ENCODE measurements at regions of chr5 and their contacts with region 1.

Region 1: GRCh38 chr5:171419688-171420430 is 412 bp downstream of the FGF18 start:
- DNase-seq: peak in 2 of 7 donors; percentile 9 to 51
- H3K4me3 ChIP-seq: peak overlapping the region in 1 of 4 donors; percentile 43
- H3K27ac ChIP-seq: no peak overlapping the region
- H3K4me1 ChIP-seq: peaks cover 18 to 28% of the 10 kb centered on the region in 2 donors
- H3K27me3 ChIP-seq: peaks cover 18% of the 10 kb centered on the region
- CTCF ChIP-seq: no peak
- POLR2A ChIP-seq: no peak

Region 2: DNA sequence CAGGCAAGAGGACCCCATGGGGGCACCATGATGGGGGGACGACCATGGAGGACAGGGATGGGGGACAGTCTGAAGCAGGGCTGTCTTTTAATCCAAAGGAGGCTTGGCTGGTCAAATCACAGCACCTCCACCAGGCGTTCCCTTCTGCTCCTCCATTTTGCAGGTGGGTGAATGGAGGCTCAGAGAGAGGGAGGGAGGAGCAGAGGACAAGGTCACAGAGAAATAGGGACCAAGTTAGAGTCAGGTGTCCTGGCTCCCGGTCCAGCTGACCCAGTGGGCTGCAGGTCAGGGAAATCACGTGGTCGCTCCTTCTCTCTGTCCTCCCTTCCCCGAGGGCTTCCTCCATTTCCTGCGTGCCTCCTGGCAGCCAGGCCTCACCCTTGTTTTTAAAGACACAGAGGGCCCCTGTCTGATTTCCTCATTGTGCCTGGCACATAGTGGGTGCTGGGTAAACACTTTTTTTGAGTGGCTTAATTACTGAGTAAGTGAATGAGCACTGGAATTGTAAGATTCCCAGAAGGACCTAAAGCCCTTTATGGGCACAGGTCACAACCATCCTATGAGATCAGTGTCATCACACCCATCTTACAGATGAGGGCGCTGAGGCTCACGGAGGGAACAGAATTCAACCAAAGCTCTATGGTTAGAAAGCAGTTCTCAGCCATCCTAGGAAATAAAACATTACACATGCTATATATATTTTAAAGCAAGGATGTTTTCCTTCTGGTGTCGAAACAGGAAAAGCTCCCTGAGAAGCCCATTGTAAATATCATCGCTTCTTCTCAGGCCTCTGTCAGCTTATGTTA is 209.6 kb after region 1 on chr5:
- intact Hi-C with region 1: loop called in 1 of 2 experiments (anchors 10 kb)
- DNase-seq: no peak
- H3K4me3 ChIP-seq: no peak overlapping the region
- H3K27ac ChIP-seq: no peak overlapping the region
- H3K4me1 ChIP-seq: peaks cover 0 to 9% of the 10 kb centered on the region in 2 donors
- H3K27me3 ChIP-seq: peaks cover 10% of the 10 kb centered on the region
- CTCF ChIP-seq: no peak
- POLR2A ChIP-seq: no peak

Region 3: GRCh38 chr5:171762903-171763302 is 343.0 kb after region 1 on chr5:
- intact Hi-C with region 1: no loop called
- DNase-seq: no peak
- H3K4me3 ChIP-seq: no peak overlapping the region
- H3K27ac ChIP-seq: no peak overlapping the region
- H3K4me1 ChIP-seq: no peaks in the 10 kb centered on the region
- H3K27me3 ChIP-seq: no peaks in the 10 kb centered on the region
- CTCF ChIP-seq: no peak
- POLR2A ChIP-seq: no peak

Region 4: DNA sequence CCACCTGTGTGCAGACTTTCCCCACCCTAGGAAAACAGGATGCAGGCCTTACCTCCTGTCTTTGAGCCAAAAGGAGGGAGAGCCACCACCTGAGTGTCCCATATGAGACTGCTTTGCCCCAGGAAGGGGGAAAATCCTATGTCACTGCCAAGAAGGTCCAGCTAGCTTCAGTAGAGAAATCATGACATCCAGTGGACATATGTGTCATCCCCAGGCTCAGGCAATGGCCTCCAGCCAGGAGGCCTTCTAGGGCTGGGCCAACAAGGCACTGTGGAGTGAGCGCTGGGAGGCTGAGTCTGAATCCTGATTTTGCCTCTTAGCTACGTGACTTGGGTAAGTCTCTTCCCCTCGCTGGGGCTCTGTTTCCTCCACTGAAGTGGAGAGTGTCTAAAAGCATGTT is 426.0 kb after region 1 on chr5:
- intact Hi-C with region 1: loop called in 1 of 2 experiments (anchors 10 kb)
- DNase-seq: peak in 6 of 7 donors; percentile 34 to 54 (median 45)
- H3K4me3 ChIP-seq: no peak overlapping the region
- H3K27ac ChIP-seq: no peak overlapping the region
- H3K4me1 ChIP-seq: no peaks in the 10 kb centered on the region
- H3K27me3 ChIP-seq: no peaks in the 10 kb centered on the region
- CTCF ChIP-seq: no peak
- POLR2A ChIP-seq: no peak

Region 5: DNA sequence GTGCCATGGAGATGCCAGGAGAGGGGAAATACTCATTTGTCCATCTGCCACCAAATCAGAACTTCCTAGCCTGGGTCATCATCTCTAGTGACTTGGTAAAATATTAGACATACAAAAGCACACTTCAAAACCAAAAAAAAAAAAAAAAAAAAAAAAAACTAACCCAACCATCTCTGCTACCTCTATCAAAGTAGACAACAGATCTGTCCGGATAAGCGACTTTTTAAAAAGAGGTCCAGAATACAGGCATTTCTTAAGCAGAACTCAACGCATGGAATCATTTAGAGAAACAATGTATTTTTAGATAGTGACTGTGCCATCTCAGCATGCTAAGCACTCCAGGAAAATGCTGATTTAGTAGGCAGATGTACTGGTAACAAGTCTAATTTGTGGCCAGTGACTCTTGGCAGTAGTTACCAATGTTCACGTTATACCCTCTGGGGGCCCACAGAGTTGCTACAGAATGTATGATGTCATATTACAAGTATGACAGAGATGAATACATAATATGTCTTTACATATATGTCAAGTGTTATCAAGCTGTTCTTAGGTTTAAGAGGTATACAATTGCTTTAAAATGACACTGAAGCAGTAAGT is 473.5 kb after region 1 on chr5:
- intact Hi-C with region 1: loop called in 1 of 2 experiments (anchors 10 kb)
- DNase-seq: no peak
- H3K4me3 ChIP-seq: no peak overlapping the region
- H3K27ac ChIP-seq: no peak overlapping the region
- H3K4me1 ChIP-seq: peaks cover 0 to 8% of the 10 kb centered on the region in 2 donors
- H3K27me3 ChIP-seq: no peaks in the 10 kb centered on the region
- CTCF ChIP-seq: no peak
- POLR2A ChIP-seq: no peak

Region 6: GRCh38 chr5:171899796-171900195 is 479.9 kb after region 1 on chr5:
- intact Hi-C with region 1: loop called (anchors 5 to 10 kb)
- DNase-seq: no peak
- H3K4me3 ChIP-seq: no peak overlapping the region
- H3K27ac ChIP-seq: no peak overlapping the region
- H3K4me1 ChIP-seq: peaks cover 0 to 14% of the 10 kb centered on the region in 2 donors
- H3K27me3 ChIP-seq: no peaks in the 10 kb centered on the region
- CTCF ChIP-seq: no peak
- POLR2A ChIP-seq: no peak